Panc1 (cell line): ENCODE measurements at regions of chr2 and their contacts with region 1.

Region 1: GRCh38 chr2:69012310-69013141 is 453 bp upstream of the ANTXR1 start:
- DNase-seq: no peak
- ATAC-seq: peak; percentile 64
- H3K4me3 ChIP-seq: peak overlapping the region; percentile 85 to 98
- H3K27ac ChIP-seq: peak overlapping the region; percentile 96
- H3K4me1 ChIP-seq: peaks cover 25% of the 10 kb centered on the region
- H3K27me3 ChIP-seq: no peaks in the 10 kb centered on the region
- CTCF ChIP-seq: peak; percentile 88

Region 2: DNA sequence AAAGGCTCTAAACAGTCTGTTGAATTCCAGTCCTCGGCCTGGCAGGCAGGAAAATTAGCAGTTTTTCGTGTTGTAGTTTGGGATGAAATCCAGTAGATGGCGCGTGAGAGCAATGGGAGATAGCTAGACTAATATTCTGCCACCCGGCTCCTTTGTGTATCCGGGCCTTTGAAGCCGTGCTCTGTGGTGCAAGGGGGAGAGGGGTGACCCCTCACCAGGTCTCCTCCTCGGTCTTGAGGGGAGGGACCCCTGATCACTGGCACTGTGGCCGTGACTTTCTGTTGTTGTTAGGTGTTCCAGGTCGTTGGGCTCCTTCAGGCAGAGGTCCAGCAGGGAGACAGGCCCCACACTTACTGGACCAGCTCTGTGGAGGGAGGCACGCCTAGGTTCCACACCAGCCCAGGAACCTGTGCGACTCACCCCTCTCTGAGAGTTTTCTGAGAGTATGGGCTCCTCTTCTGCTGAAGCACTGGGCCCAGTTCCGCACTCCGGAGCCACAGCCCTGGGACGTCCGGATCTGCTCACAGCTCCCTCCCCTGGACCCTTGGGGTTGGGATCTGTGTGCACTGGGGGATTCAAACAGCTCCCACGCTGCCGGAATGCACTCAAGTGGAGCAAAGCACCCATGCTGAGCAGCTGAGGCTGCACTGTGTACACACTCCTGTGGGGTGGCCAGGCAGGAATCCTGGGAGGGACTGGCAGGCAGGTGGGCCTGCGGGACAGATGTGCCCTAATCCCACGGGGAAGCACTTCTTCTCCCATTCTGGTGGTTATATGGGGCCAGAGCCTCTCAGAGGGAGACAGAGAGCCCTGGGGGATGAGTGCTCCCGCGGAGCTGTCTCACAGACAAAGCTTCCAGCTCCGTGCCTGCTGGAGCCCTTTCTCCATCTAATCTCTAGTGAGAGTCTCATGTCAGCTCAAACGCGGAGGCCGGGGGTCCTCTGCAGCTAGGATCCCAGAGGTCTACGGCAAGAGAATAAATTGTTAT is 68.7 kb before region 1 on chr2:
- CTCF ChIA-PET with region 1: no interaction called
- POLR2A ChIA-PET with region 1: no interaction called
- in situ Hi-C with region 1: no loop called
- intact Hi-C with region 1: loop called (anchors 10 kb)
- DNase-seq: peak; percentile 52
- ATAC-seq: peak; percentile 93
- H3K4me3 ChIP-seq: no peak overlapping the region
- H3K27ac ChIP-seq: peak overlapping the region; percentile 67
- H3K4me1 ChIP-seq: peaks cover 4% of the 10 kb centered on the region; the same call in 1 of the 2 replicates
- H3K27me3 ChIP-seq: no peaks in the 10 kb centered on the region
- CTCF ChIP-seq: peak; percentile 92

Region 3: GRCh38 chr2:70124983-70125480 is 1112.5 kb after region 1 on chr2:
- CTCF ChIA-PET with region 1: no interaction called
- POLR2A ChIA-PET with region 1: no interaction called
- in situ Hi-C with region 1: no loop called
- intact Hi-C with region 1: no loop called
- DNase-seq: no peak
- ATAC-seq: peak; percentile 78
- H3K4me3 ChIP-seq: peak overlapping the region; percentile 49 to 88
- H3K27ac ChIP-seq: peak overlapping the region; percentile 95
- H3K4me1 ChIP-seq: peaks cover 23% of the 10 kb centered on the region
- H3K27me3 ChIP-seq: no peaks in the 10 kb centered on the region
- CTCF ChIP-seq: no peak